ENCODE measurements at regions of chr19 and their contacts with region 1.

Region 1: GRCh38 chr19:10565567-10566407 is at the start of gene KRI1:
- DNase-seq: peak; percentile 97 to 100 (median 99)
- ATAC-seq: peak; percentile 52
- H3K4me3 ChIP-seq: peak within 1 kb of the TSS; percentile 87
- H3K4me3 Mint-ChIP-seq: peak within 1 kb of the TSS; percentile 93
- H3K27ac ChIP-seq: peak within 1 kb of the TSS; percentile 80 to 94
- H3K27ac Mint-ChIP-seq: peak within 1 kb of the TSS; percentile 95
- H3K4me1 ChIP-seq: peaks cover 56% of the 10 kb centered on the region
- H3K4me1 Mint-ChIP-seq: peaks cover 46% of the 10 kb centered on the region
- H3K27me3 ChIP-seq: no peaks in the 10 kb centered on the region
- H3K27me3 Mint-ChIP-seq: no peaks in the 10 kb centered on the region
- CTCF ChIP-seq: no peak
- total RNA-seq, gene KRI1: 36.8 to 39.6 TPM

Region 2: GRCh38 chr19:10416380-10417257 is 149.2 kb before region 1 on chr19:
- CTCF ChIA-PET with region 1: no interaction called
- POLR2A ChIA-PET with region 1: no interaction called
- intact Hi-C with region 1: loop called in 1 of 2 experiments (anchors 5 kb)
- DNase-seq: peak; percentile 70 to 99 (median 90)
- ATAC-seq: peak; percentile 69
- H3K4me3 ChIP-seq: peak overlapping the region; percentile 52
- H3K4me3 Mint-ChIP-seq: peak overlapping the region; percentile 76
- H3K27ac ChIP-seq: peak overlapping the region; percentile 31 to 34
- H3K27ac Mint-ChIP-seq: peak overlapping the region; percentile 79
- H3K4me1 ChIP-seq: peaks cover 76% of the 10 kb centered on the region
- H3K4me1 Mint-ChIP-seq: peaks cover 49% of the 10 kb centered on the region
- H3K27me3 ChIP-seq: peaks cover 40 to 44% of the 10 kb centered on the region in 2 experiments
- H3K27me3 Mint-ChIP-seq: peaks cover 42% of the 10 kb centered on the region
- CTCF ChIP-seq: peak; percentile 98

Region 3: DNA sequence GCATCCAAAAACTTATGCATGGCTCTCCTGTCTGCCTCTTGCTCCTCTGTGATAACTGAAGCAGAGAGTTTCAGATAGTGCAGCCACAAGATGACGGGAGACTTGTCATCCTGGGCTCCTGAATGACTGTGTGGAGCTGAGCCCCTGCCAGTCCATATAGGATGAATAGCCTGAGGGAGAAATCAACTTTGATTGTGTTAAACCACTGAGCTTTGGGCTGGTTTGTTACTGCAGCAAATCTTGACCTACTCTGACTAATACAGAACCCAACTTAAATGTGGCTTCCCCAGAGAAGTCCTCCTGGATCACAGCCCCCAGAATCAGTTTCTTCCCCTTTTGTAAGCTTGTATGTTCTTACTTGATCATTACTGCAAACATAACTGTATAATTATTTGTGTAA is 33.3 kb before region 1 on chr19:
- CTCF ChIA-PET with region 1: no interaction called
- POLR2A ChIA-PET with region 1: no interaction called
- intact Hi-C with region 1: no loop called
- DNase-seq: no peak
- ATAC-seq: no peak
- H3K4me3 ChIP-seq: no peak overlapping the region
- H3K4me3 Mint-ChIP-seq: no peak overlapping the region
- H3K27ac ChIP-seq: no peak overlapping the region
- H3K27ac Mint-ChIP-seq: no peak overlapping the region
- H3K4me1 ChIP-seq: no peaks in the 10 kb centered on the region
- H3K4me1 Mint-ChIP-seq: no peaks in the 10 kb centered on the region
- H3K27me3 ChIP-seq: peaks cover under 1 to 4% of the 10 kb centered on the region in 2 experiments
- H3K27me3 Mint-ChIP-seq: peaks cover 12% of the 10 kb centered on the region
- CTCF ChIP-seq: no peak

Region 4: DNA sequence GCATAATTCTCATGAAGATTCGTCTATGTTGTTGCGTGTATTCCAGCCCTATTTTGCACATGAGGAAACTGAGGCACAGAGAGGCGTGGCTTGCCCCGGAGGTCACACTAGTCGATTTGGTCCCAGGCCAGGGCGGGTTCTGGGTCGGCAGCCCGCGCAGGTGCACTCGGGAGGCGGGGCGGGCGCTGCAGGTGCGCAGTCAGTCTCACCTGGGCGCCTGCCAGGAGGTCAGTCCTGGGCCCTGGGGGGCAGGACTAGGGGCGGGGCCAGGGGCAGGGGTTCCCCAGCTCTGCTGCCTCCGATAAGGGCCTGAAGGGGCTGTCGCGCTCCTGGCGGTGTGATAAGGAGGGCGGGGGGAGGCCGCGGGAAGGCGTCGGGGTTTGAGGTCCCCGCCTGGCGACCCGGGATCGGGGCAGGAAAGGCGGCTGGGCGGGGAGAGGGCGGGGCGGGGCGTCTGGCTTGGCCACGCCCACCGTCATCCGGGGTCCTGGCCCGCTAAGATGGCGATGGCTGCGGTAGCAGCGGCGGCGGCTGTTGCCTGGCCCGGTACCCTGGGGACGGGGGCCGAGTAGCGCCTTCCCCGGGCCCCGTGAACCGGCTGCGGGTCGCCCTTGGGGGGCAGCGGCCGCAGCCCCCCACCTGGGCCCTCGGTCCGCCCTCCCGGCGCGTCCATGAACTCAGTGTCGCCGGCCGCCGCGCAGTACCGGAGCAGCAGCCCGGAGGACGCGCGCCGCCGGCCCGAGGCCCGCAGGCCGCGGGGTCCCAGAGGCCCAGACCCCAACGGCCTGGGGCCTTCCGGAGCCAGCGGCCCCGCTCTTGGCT is 22.2 kb before region 1 on chr19 and contains the start of gene ATG4D:
- CTCF ChIA-PET with region 1: interaction called, 24 read pairs
- POLR2A ChIA-PET with region 1: interaction called, 9 read pairs
- intact Hi-C with region 1: loop called in 1 of 2 experiments (anchors 1 kb)
- DNase-seq: peak; percentile 68 to 92 (median 80)
- ATAC-seq: peak; percentile 86
- H3K4me3 ChIP-seq: peak within 1 kb of the TSS; percentile 90
- H3K4me3 Mint-ChIP-seq: peak within 1 kb of the TSS; percentile 89
- H3K27ac ChIP-seq: peak within 1 kb of the TSS; percentile 48 to 78
- H3K27ac Mint-ChIP-seq: peak within 1 kb of the TSS; percentile 79
- H3K4me1 ChIP-seq: peaks cover 27% of the 10 kb centered on the region
- H3K4me1 Mint-ChIP-seq: peaks cover 18% of the 10 kb centered on the region
- H3K27me3 ChIP-seq: peaks cover 0 to 3% of the 10 kb centered on the region in 2 experiments
- H3K27me3 Mint-ChIP-seq: peaks cover 5% of the 10 kb centered on the region
- CTCF ChIP-seq: no peak
- total RNA-seq, gene ATG4D: 81.1 to 84.6 TPM

Region 5: GRCh38 chr19:10551698-10552301 is 14.0 kb before region 1 on chr19:
- CTCF ChIA-PET with region 1: interaction called, 6 read pairs
- POLR2A ChIA-PET with region 1: interaction called, 81 read pairs
- intact Hi-C with region 1: no loop called
- DNase-seq: peak in 7 of 14 experiments; percentile 33 to 74 (median 44)
- ATAC-seq: no peak
- H3K4me3 ChIP-seq: no peak overlapping the region
- H3K4me3 Mint-ChIP-seq: no peak overlapping the region
- H3K27ac ChIP-seq: peak overlapping the region in 1 of 2 donors; percentile 57
- H3K27ac Mint-ChIP-seq: peak overlapping the region; percentile 42
- H3K4me1 ChIP-seq: peaks cover 65% of the 10 kb centered on the region
- H3K4me1 Mint-ChIP-seq: peaks cover 45% of the 10 kb centered on the region
- H3K27me3 ChIP-seq: no peaks in the 10 kb centered on the region
- H3K27me3 Mint-ChIP-seq: no peaks in the 10 kb centered on the region
- CTCF ChIP-seq: no peak

Region 6: GRCh38 chr19:10644260-10645007 is 78.6 kb after region 1 on chr19:
- CTCF ChIA-PET with region 1: interaction called, 5 read pairs
- POLR2A ChIA-PET with region 1: interaction called, 12 read pairs
- intact Hi-C with region 1: no loop called
- DNase-seq: peak; percentile 79 to 91 (median 84)
- ATAC-seq: peak; percentile 97
- H3K4me3 ChIP-seq: no peak overlapping the region
- H3K4me3 Mint-ChIP-seq: peak overlapping the region; percentile 48
- H3K27ac ChIP-seq: peak overlapping the region; percentile 4 to 34
- H3K27ac Mint-ChIP-seq: peak overlapping the region; percentile 80
- H3K4me1 ChIP-seq: peaks cover 29% of the 10 kb centered on the region
- H3K4me1 Mint-ChIP-seq: peaks cover 31% of the 10 kb centered on the region
- H3K27me3 ChIP-seq: no peaks in the 10 kb centered on the region
- H3K27me3 Mint-ChIP-seq: no peaks in the 10 kb centered on the region
- CTCF ChIP-seq: peak; percentile 87

Region 7: GRCh38 chr19:10653715-10654492 is 88.1 kb after region 1 on chr19 and contains the start of gene ILF3:
- CTCF ChIA-PET with region 1: no interaction called
- POLR2A ChIA-PET with region 1: interaction called, 5 read pairs
- intact Hi-C with region 1: loop called in 1 of 2 experiments (anchors 5 kb)
- DNase-seq: peak; percentile 99 to 100 (median 100)
- ATAC-seq: peak; percentile 74
- H3K4me3 ChIP-seq: peak within 1 kb of the TSS; percentile 92
- H3K4me3 Mint-ChIP-seq: peak within 1 kb of the TSS; percentile 94
- H3K27ac ChIP-seq: peak within 1 kb of the TSS; percentile 99 to 100
- H3K27ac Mint-ChIP-seq: peak within 1 kb of the TSS; percentile 92
- H3K4me1 ChIP-seq: peaks cover 58% of the 10 kb centered on the region
- H3K4me1 Mint-ChIP-seq: peaks cover 52% of the 10 kb centered on the region
- H3K27me3 ChIP-seq: no peaks in the 10 kb centered on the region
- H3K27me3 Mint-ChIP-seq: peaks cover 4% of the 10 kb centered on the region
- CTCF ChIP-seq: no peak
- total RNA-seq, gene ILF3: 464 to 491 TPM

Region 8: DNA sequence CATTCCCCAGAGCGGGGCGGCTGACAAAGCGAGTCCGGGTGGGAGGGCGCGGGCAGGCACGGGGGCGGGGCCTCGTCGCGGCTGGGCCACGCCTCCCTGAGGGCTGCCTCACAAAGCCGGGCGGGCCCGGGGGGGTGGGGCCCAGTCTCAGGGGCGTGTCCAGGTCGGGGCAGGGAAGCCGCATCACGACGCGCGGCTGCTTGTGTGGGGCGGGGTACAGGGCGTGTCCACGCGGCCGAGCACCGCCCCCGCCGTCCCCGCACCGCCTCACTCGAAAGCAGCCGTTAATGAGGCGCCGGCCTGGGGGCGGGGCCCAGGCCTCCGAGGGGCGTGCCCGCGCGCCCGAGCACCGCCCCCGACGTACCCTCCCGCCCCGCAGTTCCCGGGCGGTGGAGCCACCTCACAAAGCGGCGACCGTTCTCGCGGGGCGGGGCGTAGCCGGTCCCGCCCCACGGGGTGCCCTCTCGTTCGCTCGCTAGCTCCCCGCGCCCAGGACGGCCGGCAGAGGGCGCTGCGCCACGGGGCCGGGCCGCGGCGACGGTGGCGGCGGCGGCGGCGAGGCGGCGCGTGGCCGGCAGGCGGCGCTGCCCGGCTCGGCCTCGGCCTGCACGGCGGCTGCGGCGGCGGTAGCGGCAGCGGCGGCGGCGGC is 305.3 kb after region 1 on chr19 and contains the start of gene CARM1:
- CTCF ChIA-PET with region 1: no interaction called
- POLR2A ChIA-PET with region 1: interaction called, 3 read pairs
- intact Hi-C with region 1: loop called in 1 of 2 experiments (anchors 2 kb)
- DNase-seq: peak; percentile 98 to 100 (median 99)
- ATAC-seq: peak; percentile 83
- H3K4me3 ChIP-seq: peak within 1 kb of the TSS; percentile 69
- H3K4me3 Mint-ChIP-seq: peak within 1 kb of the TSS; percentile 86
- H3K27ac ChIP-seq: peak within 1 kb of the TSS in 1 of 2 donors; percentile 57
- H3K27ac Mint-ChIP-seq: peak within 1 kb of the TSS; percentile 54
- H3K4me1 ChIP-seq: peaks cover 26% of the 10 kb centered on the region
- H3K4me1 Mint-ChIP-seq: peaks cover 18% of the 10 kb centered on the region
- H3K27me3 ChIP-seq: no peaks in the 10 kb centered on the region
- H3K27me3 Mint-ChIP-seq: no peaks in the 10 kb centered on the region
- CTCF ChIP-seq: peak; percentile 34
- total RNA-seq, gene CARM1: 17.5 to 18.0 TPM

Measured in CD4-positive, alpha-beta T cell (primary cell).